Transverse colon (tissue), 4 donors: ENCODE measurements at regions of chr5 and their contacts with region 1.

Region 1: GRCh38 chr5:72523960-72524582 is 16.9 kb upstream of the ZNF366 start:
- DNase-seq: no peak
- H3K4me3 ChIP-seq: no peak overlapping the region
- H3K27ac ChIP-seq: no peak overlapping the region
- H3K4me1 ChIP-seq: no peaks in the 10 kb centered on the region
- H3K27me3 ChIP-seq: no peaks in the 10 kb centered on the region
- CTCF ChIP-seq: peak; percentile 46 to 66 (median 54)
- EP300 ChIP-seq: no peak
- POLR2A ChIP-seq: no peak

Region 2: DNA sequence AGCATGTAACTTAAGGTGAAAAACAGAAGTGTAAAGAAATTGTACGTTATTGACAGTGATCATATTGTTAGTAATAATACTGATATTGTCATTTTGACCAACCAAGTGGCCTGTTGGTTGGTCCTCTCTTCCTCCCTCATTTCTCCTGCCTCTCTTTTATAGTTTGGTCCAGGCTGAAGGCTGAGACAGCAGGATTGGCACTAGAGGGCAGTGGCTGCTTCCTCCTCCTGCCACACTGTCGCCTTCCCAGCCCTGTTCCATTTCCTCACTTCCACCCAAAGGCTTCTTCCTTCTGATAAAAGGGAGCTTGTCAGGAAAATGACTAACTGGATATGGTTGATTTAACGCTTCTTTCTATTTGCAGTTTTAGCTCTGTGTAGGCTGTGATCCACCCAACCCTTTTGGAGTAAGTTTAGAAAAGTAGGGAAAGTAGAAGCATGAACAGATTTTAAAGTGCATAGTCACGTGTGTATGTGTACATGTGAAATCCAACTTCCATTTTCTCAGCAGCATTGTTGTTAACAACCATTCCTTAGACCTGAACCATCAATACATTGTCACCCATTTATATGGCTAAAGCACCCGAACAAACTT is 168.3 kb before region 1 on chr5:
- in situ Hi-C with region 1: loop called in 1 of 4 experiments (anchors 10 kb)
- intact Hi-C with region 1: loop called (anchors 10 kb)
- DNase-seq: peak; percentile 11
- H3K4me3 ChIP-seq: no peak overlapping the region
- H3K27ac ChIP-seq: no peak overlapping the region
- H3K4me1 ChIP-seq: no peaks in the 10 kb centered on the region
- H3K27me3 ChIP-seq: no peaks in the 10 kb centered on the region
- CTCF ChIP-seq: peak in 3 of 5 experiments; percentile 12 to 44 (median 28)
- EP300 ChIP-seq: no peak
- POLR2A ChIP-seq: no peak

Region 3: DNA sequence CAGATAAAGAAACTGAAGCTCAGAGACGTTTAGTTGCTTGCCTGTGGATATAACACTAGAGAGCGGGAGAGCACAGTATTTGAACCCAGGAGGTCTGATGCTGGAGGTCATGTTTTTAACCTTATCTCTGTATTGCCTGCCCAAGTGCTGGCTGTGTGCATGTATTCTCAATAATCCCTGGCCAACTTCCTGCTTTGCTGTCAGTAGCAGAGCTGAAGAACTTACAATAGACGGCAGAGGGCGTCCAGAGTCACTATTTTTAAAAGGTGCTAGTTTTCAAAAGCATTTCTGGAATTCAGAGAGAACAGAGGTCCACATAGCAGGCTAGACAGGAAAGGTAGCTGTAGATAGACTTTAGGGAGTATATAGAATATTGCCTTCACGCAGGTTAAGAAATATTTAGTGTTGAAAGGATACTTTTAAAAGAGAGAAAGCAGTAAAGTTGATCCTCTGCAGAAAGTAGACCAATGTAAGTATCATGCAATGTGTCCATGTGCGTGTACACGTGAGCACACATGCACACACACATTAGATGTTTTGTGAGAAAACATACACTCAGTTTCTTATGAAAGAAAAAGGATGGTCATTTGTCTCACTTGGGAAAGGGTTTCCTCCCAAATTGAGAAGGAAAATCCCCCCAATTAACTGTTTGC is 157.6 kb before region 1 on chr5:
- in situ Hi-C with region 1: loop called in 2 of 4 experiments (anchors 5 to 10 kb)
- intact Hi-C with region 1: loop called (anchors 10 kb)
- DNase-seq: peak; percentile 63
- H3K4me3 ChIP-seq: no peak overlapping the region
- H3K27ac ChIP-seq: no peak overlapping the region
- H3K4me1 ChIP-seq: peaks cover 0 to 8% (median 0%) of the 10 kb centered on the region in 4 donors
- H3K27me3 ChIP-seq: no peaks in the 10 kb centered on the region
- CTCF ChIP-seq: peak; percentile 69 to 75 (median 73)
- EP300 ChIP-seq: no peak
- POLR2A ChIP-seq: no peak

Region 4: GRCh38 chr5:72378636-72379290 is 145.3 kb before region 1 on chr5:
- in situ Hi-C with region 1: loop called in 3 of 4 experiments (anchors 5 to 10 kb)
- intact Hi-C with region 1: no loop called
- DNase-seq: no peak
- H3K4me3 ChIP-seq: no peak overlapping the region
- H3K27ac ChIP-seq: no peak overlapping the region
- H3K4me1 ChIP-seq: peaks cover 0 to 4% (median 0%) of the 10 kb centered on the region in 4 donors
- H3K27me3 ChIP-seq: no peaks in the 10 kb centered on the region
- CTCF ChIP-seq: no peak
- EP300 ChIP-seq: no peak
- POLR2A ChIP-seq: no peak

Region 5: GRCh38 chr5:72799721-72800120 is 275.6 kb after region 1 on chr5:
- in situ Hi-C with region 1: no loop called
- intact Hi-C with region 1: no loop called
- DNase-seq: no peak
- H3K4me3 ChIP-seq: no peak overlapping the region
- H3K27ac ChIP-seq: no peak overlapping the region
- H3K4me1 ChIP-seq: no peaks in the 10 kb centered on the region
- H3K27me3 ChIP-seq: no peaks in the 10 kb centered on the region
- CTCF ChIP-seq: no peak
- EP300 ChIP-seq: no peak
- POLR2A ChIP-seq: no peak